GM12878 (cell line): ENCODE measurements at regions of chr12 and their contacts with region 1.

Region 1: GRCh38 chr12:131773582-131774221 is 54.5 kb upstream of the MMP17 start:
- DNase-seq: peak; percentile 84
- ATAC-seq: peak; percentile 91
- H3K4me3 ChIP-seq: peak overlapping the region; percentile 11; the same call in 1 of the 2 replicates
- H3K27ac ChIP-seq: peak overlapping the region; percentile 88
- H3K4me1 ChIP-seq: peaks cover 41% of the 10 kb centered on the region
- H3K27me3 ChIP-seq: no peaks in the 10 kb centered on the region
- CTCF ChIP-seq: no peak
- EP300 ChIP-seq: peak in 1 of 2 experiments; percentile 71; a peak in 1 of 4 replicates
- POLR2A ChIP-seq: peak; percentile 58
- RAD21 ChIP-seq: no peak

Region 2: DNA sequence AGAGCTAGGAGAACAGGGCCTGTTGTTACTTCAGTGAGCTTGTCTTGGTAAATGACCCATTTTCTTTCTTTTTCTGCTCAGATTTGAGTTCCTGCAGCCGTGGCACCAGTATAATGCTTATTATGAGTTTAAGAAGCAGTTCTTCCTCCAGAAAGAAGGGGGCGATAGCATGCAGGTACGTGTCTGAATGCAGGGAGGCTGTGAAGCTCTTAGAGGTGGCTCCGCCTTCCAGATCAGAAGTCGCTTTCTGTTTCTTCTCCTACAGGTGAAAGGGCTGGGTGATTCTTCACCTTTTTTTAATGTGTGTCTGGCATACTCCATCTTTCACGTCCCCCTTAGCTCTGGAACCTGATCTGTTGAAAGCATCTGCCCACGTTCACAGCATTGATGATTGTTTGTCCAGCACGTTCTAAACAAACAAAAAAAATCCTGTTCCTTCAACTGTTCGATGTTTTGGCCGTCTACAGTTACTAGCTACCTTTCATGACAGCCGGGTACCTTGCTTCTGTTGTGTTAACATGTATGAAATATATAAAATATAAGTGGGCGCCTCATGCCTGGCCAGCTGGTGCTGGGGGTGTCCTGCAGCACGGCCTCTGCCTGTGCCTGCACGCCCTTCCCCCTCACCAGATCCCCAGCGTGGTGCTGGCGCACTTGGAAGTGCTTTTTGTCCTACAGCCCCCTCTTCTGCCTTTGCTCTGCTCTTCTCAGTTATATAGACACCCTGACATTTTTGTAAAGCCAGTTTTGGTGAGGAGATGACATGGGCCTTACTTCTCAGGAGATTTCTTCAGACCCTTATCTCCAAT is 18.2 kb before region 1 on chr12:
- CTCF ChIA-PET with region 1: interaction called, 13 read pairs
- POLR2A ChIA-PET with region 1: no interaction called
- RAD21 ChIA-PET with region 1: interaction called, 8 read pairs
- SMC1A ChIA-PET with region 1: interaction called, 12 read pairs
- in situ Hi-C with region 1: no loop called
- intact Hi-C with region 1: no loop called
- DNase-seq: no peak
- ATAC-seq: peak; percentile 95
- H3K4me3 ChIP-seq: no peak overlapping the region
- H3K27ac ChIP-seq: no peak overlapping the region
- H3K4me1 ChIP-seq: no peaks in the 10 kb centered on the region
- H3K27me3 ChIP-seq: no peaks in the 10 kb centered on the region
- CTCF ChIP-seq: peak; percentile 49 to 57 (median 53); a peak in 5 of 6 replicates
- EP300 ChIP-seq: no peak
- POLR2A ChIP-seq: no peak
- RAD21 ChIP-seq: peak; percentile 45

Region 3: GRCh38 chr12:131783915-131784541 is 10.3 kb after region 1 on chr12:
- CTCF ChIA-PET with region 1: interaction called, 4 read pairs
- POLR2A ChIA-PET with region 1: interaction called, 13 read pairs
- RAD21 ChIA-PET with region 1: interaction called, 3 read pairs
- SMC1A ChIA-PET with region 1: interaction called, 6 read pairs
- in situ Hi-C with region 1: no loop called
- intact Hi-C with region 1: no loop called
- DNase-seq: peak; percentile 60
- ATAC-seq: peak; percentile 93
- H3K4me3 ChIP-seq: no peak overlapping the region
- H3K27ac ChIP-seq: peak overlapping the region; percentile 57
- H3K4me1 ChIP-seq: peaks cover 3% of the 10 kb centered on the region; the same call in 1 of the 2 replicates
- H3K27me3 ChIP-seq: no peaks in the 10 kb centered on the region
- CTCF ChIP-seq: no peak
- EP300 ChIP-seq: no peak
- POLR2A ChIP-seq: no peak
- RAD21 ChIP-seq: no peak

Region 4: DNA sequence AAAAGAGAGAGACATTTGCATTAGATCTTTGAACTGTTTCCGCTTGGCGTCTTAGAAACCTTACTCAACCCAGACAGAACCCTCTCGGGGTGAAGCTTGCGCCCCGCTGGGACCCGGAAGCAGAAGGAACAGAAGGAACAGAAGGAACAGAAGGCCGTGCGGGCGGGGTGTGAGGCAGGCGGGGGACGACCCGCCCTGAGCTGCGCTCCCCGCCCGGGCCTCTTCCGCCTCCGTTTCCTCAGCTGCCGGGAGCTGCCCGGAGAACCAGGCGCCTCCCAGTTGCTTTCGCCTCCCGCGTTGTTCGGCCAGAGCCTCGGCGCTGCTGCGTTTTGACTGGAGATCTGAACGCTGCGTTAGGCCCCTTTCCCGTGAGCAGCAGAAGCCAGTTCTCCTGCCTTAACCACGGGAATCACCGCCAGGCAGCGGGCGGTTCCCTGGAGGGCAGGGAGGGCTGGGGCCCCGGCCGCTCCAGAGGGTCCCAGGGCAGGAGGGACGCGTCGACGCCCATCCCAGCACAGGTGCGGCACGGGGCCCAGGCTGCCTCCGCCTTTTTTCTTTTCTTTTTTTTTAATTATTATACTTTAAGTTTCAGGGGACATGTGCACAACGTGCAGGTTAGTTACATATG is 35.2 kb after region 1 on chr12:
- CTCF ChIA-PET with region 1: no interaction called
- POLR2A ChIA-PET with region 1: no interaction called
- RAD21 ChIA-PET with region 1: no interaction called
- SMC1A ChIA-PET with region 1: no interaction called
- in situ Hi-C with region 1: no loop called
- intact Hi-C with region 1: no loop called
- DNase-seq: peak; percentile 7
- ATAC-seq: peak; percentile 98
- H3K4me3 ChIP-seq: no peak overlapping the region; the same call in 1 of the 2 replicates
- H3K27ac ChIP-seq: no peak overlapping the region
- H3K4me1 ChIP-seq: no peaks in the 10 kb centered on the region
- H3K27me3 ChIP-seq: no peaks in the 10 kb centered on the region
- CTCF ChIP-seq: no peak
- EP300 ChIP-seq: no peak
- POLR2A ChIP-seq: no peak
- RAD21 ChIP-seq: no peak

Region 5: DNA sequence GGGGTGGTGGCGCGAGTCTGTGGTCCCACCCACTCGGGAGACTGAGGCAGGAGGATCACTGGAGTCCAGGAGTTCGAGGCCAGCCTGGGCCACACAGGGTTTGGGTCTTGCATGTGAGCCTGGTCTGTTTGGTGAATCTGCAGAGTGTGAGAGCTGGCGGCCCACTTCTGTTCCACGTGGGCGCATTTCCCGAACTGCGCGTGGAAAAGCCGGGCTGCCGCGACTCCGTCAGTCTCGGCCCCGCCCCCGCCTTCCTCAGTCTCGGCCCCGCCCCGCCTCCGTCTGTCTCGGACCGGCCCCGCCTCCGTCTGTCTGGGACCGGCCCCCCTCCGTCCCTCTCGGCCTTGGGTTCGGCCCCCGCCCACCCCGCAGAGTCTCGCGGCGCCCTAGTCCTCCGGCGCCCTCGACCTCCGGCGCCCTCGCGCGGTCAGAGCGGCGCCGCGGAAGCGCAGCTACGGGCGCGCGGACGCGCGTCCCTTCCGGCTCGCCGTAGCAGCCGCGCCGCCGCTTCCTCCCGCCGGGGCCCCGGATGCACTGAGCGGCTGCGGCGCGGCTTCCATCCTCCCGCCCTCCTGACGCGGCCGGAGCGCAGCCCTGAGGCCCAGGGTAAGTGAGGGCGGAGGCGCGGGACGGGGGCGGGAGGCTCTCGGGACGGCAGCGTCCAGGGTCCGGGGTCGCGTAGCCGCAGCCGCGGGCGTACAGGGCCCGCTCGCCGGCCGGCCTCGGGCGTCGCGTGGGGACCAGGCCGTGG is 175.9 kb after region 1 on chr12 and contains the start of gene EP400:
- CTCF ChIA-PET with region 1: no interaction called
- POLR2A ChIA-PET with region 1: no interaction called
- RAD21 ChIA-PET with region 1: no interaction called
- SMC1A ChIA-PET with region 1: no interaction called
- in situ Hi-C with region 1: no loop called
- intact Hi-C with region 1: loop called (anchors 10 kb)
- DNase-seq: peak; percentile 53
- ATAC-seq: peak; percentile 96
- H3K4me3 ChIP-seq: peak within 1 kb of the TSS; percentile 91
- H3K27ac ChIP-seq: peak within 1 kb of the TSS; percentile 75
- H3K4me1 ChIP-seq: peaks cover 3% of the 10 kb centered on the region; the same call in 1 of the 2 replicates
- H3K27me3 ChIP-seq: no peaks in the 10 kb centered on the region
- CTCF ChIP-seq: peak; percentile 48 to 76 (median 52); a peak in 5 of 6 replicates
- EP300 ChIP-seq: 0 out of 4 replicates have a peak, but pooled peaks of 1 of the 2 experiments have one; percentile 12
- POLR2A ChIP-seq: peak; percentile 87
- RAD21 ChIP-seq: peak; percentile 69
- polyA plus RNA-seq, gene EP400: 4.0 to 6.4 TPM